CD4-positive, alpha-beta T cell (primary cell): ENCODE measurements at regions of chr12 and their contacts with region 1.

Region 1: DNA sequence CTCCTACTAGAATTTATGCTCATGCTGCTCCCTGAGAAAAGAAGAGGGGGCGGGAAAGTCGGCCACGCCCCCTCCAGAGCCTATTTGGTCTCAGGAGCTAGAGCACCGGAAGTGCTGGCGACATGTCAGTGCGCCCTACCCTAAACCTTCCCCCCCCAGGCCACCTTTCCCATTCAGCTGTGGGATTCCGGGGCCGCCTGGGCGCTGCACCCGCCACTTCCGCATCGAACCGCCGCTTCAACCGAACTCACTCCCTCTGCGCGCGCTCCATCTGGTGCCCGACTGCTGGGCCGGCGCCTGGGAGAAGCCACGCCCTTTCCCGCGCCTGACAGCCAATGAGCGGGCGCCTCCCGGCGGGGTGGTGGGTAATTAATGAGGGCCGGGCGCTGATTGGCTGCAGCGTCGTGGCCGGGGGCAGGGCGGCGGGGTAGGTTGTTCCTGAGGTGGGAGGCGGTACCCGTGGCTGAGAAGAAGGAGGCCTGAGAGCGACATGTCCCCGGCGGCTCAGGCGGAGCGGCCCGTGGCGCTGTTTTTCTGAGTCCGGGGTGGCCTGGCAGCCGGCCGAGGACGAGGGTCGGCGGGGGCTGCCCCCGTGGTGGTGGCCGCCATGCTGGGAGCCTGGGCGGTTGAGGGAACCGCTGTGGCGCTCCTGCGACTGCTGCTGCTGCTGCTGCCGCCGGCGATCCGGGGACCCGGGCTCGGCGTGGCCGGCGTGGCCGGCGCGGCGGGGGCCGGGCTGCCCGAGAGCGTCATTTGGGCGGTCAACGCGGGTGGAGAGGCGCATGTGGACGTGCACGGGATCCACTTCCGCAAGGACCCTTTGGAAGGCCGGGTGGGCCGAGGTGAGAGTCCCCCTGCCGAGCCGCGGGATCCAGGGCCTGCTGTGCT is at the start of gene MLEC:
- DNase-seq: peak; percentile 98 to 99 (median 99)
- ATAC-seq: peak; percentile 82
- H3K4me3 ChIP-seq: peak within 1 kb of the TSS; percentile 95
- H3K4me3 Mint-ChIP-seq: peak within 1 kb of the TSS; percentile 93
- H3K27ac ChIP-seq: peak within 1 kb of the TSS; percentile 75 to 96
- H3K27ac Mint-ChIP-seq: peak within 1 kb of the TSS; percentile 89
- H3K4me1 ChIP-seq: peaks cover 33% of the 10 kb centered on the region
- H3K4me1 Mint-ChIP-seq: peaks cover 50% of the 10 kb centered on the region
- H3K27me3 ChIP-seq: no peaks in the 10 kb centered on the region
- H3K27me3 Mint-ChIP-seq: no peaks in the 10 kb centered on the region
- CTCF ChIP-seq: no peak
- total RNA-seq, gene MLEC: 20.7 to 22.1 TPM

Region 2: GRCh38 chr12:120194534-120195395 is 492.2 kb before region 1 on chr12 and contains the start of gene GCN1:
- CTCF ChIA-PET with region 1: no interaction called
- POLR2A ChIA-PET with region 1: no interaction called
- intact Hi-C with region 1: loop called in 1 of 2 experiments (anchors 10 kb)
- DNase-seq: peak; percentile 75 to 92 (median 86)
- ATAC-seq: peak; percentile 88
- H3K4me3 ChIP-seq: peak within 1 kb of the TSS; percentile 64
- H3K4me3 Mint-ChIP-seq: peak within 1 kb of the TSS; percentile 95
- H3K27ac ChIP-seq: peak within 1 kb of the TSS; percentile 75 to 86
- H3K27ac Mint-ChIP-seq: peak within 1 kb of the TSS; percentile 98
- H3K4me1 ChIP-seq: peaks cover 49% of the 10 kb centered on the region
- H3K4me1 Mint-ChIP-seq: peaks cover 45% of the 10 kb centered on the region
- H3K27me3 ChIP-seq: no peaks in the 10 kb centered on the region
- H3K27me3 Mint-ChIP-seq: no peaks in the 10 kb centered on the region
- CTCF ChIP-seq: no peak
- total RNA-seq, gene GCN1: 121 to 128 TPM

Region 3: DNA sequence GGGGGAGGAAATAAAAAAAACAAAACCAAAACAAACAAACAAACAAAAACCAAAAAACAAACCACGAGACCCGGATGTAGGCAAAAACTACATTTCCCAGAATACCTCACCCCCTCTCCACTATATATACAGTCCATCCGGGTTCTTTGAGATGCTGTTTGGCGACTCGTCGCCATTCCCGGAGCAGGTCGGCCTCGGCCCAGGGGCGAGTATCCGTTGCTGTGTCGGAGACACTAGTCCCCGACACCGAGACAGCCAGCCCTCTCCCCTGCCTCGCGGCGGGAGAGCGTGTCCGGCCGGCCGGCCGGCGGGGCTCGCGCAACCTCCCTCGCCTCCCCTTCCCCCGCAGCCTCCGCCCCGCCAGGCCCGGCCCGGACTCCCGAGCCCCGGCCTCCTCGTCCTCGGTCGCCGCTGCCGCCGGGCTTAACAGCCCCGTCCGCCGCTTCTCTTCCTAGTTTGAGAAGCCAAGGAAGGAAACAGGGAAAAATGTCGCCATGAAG is 152.7 kb before region 1 on chr12 and contains the start of gene RNF10:
- CTCF ChIA-PET with region 1: no interaction called
- POLR2A ChIA-PET with region 1: no interaction called
- intact Hi-C with region 1: loop called in 1 of 2 experiments (anchors 5 kb)
- DNase-seq: peak; percentile 53 to 92 (median 68)
- ATAC-seq: peak; percentile 65
- H3K4me3 ChIP-seq: peak within 1 kb of the TSS; percentile 92
- H3K4me3 Mint-ChIP-seq: peak within 1 kb of the TSS; percentile 91
- H3K27ac ChIP-seq: peak within 1 kb of the TSS; percentile 66 to 89
- H3K27ac Mint-ChIP-seq: peak within 1 kb of the TSS; percentile 91
- H3K4me1 ChIP-seq: peaks cover 49% of the 10 kb centered on the region
- H3K4me1 Mint-ChIP-seq: peaks cover 62% of the 10 kb centered on the region
- H3K27me3 ChIP-seq: no peaks in the 10 kb centered on the region
- H3K27me3 Mint-ChIP-seq: no peaks in the 10 kb centered on the region
- CTCF ChIP-seq: no peak
- total RNA-seq, gene RNF10: 441 to 446 TPM

Region 4: DNA sequence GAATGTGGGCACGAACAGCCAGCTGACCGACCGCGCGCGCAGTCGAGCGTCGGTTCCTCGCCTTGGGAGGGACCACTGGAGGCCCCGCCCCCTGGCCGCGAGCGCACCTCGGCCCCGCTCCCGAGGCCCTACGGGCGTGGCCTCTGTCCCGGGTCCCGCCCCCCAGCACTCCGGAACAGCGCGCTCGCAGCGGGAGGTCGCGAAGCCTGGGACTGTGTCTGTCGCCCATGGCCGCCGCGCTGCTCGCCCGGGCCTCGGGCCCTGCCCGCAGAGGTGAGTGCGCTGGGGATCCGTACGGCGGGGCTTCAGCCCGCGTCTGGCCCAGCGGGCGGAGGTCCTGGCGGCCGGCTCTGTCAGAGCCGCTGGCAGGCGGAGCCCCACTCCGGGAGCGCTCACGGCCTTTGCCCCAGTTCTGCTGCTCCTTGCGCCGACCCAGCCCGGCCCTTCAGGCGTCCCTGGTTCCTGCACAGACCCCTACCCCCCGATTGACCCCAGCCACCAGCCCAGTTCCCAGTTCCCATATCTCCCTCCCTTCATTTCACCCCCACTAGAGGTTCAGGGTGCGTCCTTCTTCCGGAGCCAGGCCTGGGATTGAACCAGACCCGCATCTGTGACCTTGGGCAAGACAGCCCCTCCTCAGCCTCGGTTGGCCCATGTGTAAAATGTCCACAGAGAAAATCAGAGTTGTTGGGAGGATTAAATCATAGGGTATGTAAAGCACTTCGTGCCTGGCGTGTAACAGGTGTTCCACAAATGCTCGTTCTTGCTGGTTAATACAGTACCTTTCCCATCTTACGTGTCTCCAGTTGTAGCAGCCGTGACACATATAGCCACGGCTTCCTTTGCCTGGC is 39.0 kb after region 1 on chr12 and contains the start of gene ACADS:
- CTCF ChIA-PET with region 1: no interaction called
- POLR2A ChIA-PET with region 1: interaction called, 6 read pairs
- intact Hi-C with region 1: loop called (anchors 1 to 5 kb)
- DNase-seq: peak; percentile 72 to 95 (median 88)
- ATAC-seq: peak; percentile 99
- H3K4me3 ChIP-seq: peak within 1 kb of the TSS; percentile 75
- H3K4me3 Mint-ChIP-seq: peak within 1 kb of the TSS; percentile 97
- H3K27ac ChIP-seq: peak within 1 kb of the TSS in 1 of 2 donors; percentile 18
- H3K27ac Mint-ChIP-seq: peak within 1 kb of the TSS; percentile 72
- H3K4me1 ChIP-seq: peaks cover 28% of the 10 kb centered on the region
- H3K4me1 Mint-ChIP-seq: peaks cover 21% of the 10 kb centered on the region
- H3K27me3 ChIP-seq: no peaks in the 10 kb centered on the region
- H3K27me3 Mint-ChIP-seq: no peaks in the 10 kb centered on the region
- CTCF ChIP-seq: no peak
- total RNA-seq, gene ACADS: 8.9 to 9.2 TPM

Region 5: DNA sequence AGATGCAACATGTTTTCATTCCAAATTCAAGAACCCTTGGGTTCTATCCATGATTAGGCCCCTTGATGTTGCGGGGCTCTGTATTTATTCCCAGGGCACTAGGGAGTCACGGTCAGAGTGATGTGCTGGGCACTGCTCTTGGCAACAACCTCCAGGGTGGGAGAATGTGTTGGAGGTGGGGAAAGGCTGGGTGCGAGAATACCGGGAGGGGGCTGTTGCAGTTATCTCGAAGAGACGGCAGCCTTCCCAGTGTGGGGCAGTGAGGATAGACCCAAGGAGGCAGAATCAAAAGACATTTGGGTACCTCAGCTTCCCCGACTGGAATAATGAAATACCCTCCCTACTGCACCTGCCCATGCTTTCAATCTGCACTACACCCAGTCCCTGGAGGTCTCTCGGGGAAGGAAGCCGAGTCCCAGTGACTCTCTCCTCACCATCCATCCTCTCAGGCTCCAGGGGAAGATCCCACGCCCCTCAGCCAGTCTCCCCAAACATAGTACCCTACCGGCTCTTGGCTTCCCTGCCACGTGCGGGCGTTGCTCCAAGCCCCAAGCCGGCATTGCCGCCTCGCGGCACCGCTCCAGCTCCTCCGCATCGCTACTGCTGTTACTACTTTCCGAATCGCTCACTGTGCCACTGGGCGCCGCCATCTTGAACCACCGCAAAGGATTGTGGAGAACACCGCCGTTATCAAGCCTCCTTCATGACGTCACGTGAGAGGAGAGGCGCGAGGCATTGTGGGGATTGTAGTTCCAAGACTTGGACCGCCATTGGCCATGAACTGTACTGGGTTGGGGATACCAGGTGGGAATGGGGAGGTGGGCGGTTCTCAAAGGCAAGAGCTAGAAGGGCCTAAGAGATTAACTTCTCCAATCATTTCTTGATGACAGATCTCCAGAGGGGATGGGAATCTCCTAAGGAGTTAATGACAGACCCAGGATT is 329.2 kb after region 1 on chr12 and contains the start of gene C12orf43:
- CTCF ChIA-PET with region 1: no interaction called
- POLR2A ChIA-PET with region 1: no interaction called
- intact Hi-C with region 1: loop called in 1 of 2 experiments (anchors 5 kb)
- DNase-seq: peak; percentile 84 to 95 (median 90)
- ATAC-seq: peak; percentile 99
- H3K4me3 ChIP-seq: peak within 1 kb of the TSS; percentile 74
- H3K4me3 Mint-ChIP-seq: peak within 1 kb of the TSS; percentile 90
- H3K27ac ChIP-seq: peak within 1 kb of the TSS; percentile 73 to 74
- H3K27ac Mint-ChIP-seq: peak within 1 kb of the TSS; percentile 82
- H3K4me1 ChIP-seq: peaks cover 11% of the 10 kb centered on the region
- H3K4me1 Mint-ChIP-seq: peaks cover 16% of the 10 kb centered on the region
- H3K27me3 ChIP-seq: no peaks in the 10 kb centered on the region
- H3K27me3 Mint-ChIP-seq: no peaks in the 10 kb centered on the region
- CTCF ChIP-seq: no peak
- total RNA-seq, gene C12orf43: 14.4 to 15.8 TPM